SK-N-SH (cell line): ENCODE measurements at regions of chr11 and their contacts with region 1.

Region 1: GRCh38 chr11:2305140-2305840 is 3.5 kb downstream of the TSPAN32 start:
- DNase-seq: peak; percentile 85
- H3K4me3 ChIP-seq: peak overlapping the region in 1 of 2 experiments; percentile 27; a peak in 1 of 4 replicates
- H3K27ac ChIP-seq: peak overlapping the region; percentile 82 to 87; a peak in 3 of 4 replicates
- H3K4me1 ChIP-seq: peaks cover 12 to 48% of the 10 kb centered on the region in 2 experiments; a peak in 3 of 4 replicates
- H3K27me3 ChIP-seq: no peaks in the 10 kb centered on the region
- CTCF ChIP-seq: peak; percentile 85
- EP300 ChIP-seq: no peak
- RAD21 ChIP-seq: peak; percentile 88

Region 2: GRCh38 chr11:2186669-2187279 is 118.5 kb before region 1 on chr11:
- CTCF ChIA-PET with region 1: interaction called, 18 read pairs
- POLR2A ChIA-PET with region 1: interaction called, 3 read pairs
- DNase-seq: peak; percentile 80
- H3K4me3 ChIP-seq: no peak overlapping the region
- H3K27ac ChIP-seq: no peak overlapping the region; a peak in 1 of 4 replicates
- H3K4me1 ChIP-seq: peaks cover 0 to 39% of the 10 kb centered on the region in 2 experiments; a peak in 1 of 4 replicates
- H3K27me3 ChIP-seq: no peaks in the 10 kb centered on the region
- CTCF ChIP-seq: peak; percentile 17; the same call in 1 of the 2 replicates
- EP300 ChIP-seq: no peak
- RAD21 ChIP-seq: peak; percentile 73

Region 3: DNA sequence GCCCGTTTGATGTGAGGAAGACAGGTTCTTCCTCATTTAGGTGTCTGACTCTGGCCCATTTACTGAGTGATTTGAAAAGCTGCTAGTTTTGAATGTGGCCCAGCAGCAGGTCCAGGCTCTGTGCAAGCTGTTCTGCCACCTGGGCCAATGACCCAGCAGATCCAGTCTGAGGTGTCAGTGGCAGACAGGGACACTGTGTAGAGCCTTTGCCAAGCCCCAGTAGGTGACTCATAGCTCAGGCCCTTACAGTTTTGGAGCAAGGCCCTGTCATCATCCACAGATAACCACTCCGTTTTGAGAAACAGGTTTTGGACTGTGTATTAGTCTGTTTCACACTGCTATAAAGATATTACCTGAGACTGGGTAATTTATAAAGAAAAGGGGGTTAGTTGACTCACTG is 20.4 kb after region 1 on chr11:
- CTCF ChIA-PET with region 1: interaction called, 12 read pairs
- POLR2A ChIA-PET with region 1: no interaction called
- DNase-seq: no peak
- H3K4me3 ChIP-seq: no peak overlapping the region
- H3K27ac ChIP-seq: no peak overlapping the region
- H3K4me1 ChIP-seq: no peaks in the 10 kb centered on the region
- H3K27me3 ChIP-seq: no peaks in the 10 kb centered on the region
- CTCF ChIP-seq: no peak
- EP300 ChIP-seq: no peak
- RAD21 ChIP-seq: no peak

Region 4: GRCh38 chr11:2390725-2391151 is 85.4 kb after region 1 on chr11:
- CTCF ChIA-PET with region 1: interaction called, 17 read pairs
- POLR2A ChIA-PET with region 1: no interaction called
- DNase-seq: no peak
- H3K4me3 ChIP-seq: no peak overlapping the region
- H3K27ac ChIP-seq: no peak overlapping the region
- H3K4me1 ChIP-seq: peaks cover 9 to 32% of the 10 kb centered on the region in 2 experiments; a peak in 2 of 4 replicates
- H3K27me3 ChIP-seq: no peaks in the 10 kb centered on the region
- CTCF ChIP-seq: no peak
- EP300 ChIP-seq: no peak
- RAD21 ChIP-seq: no peak

Region 5: DNA sequence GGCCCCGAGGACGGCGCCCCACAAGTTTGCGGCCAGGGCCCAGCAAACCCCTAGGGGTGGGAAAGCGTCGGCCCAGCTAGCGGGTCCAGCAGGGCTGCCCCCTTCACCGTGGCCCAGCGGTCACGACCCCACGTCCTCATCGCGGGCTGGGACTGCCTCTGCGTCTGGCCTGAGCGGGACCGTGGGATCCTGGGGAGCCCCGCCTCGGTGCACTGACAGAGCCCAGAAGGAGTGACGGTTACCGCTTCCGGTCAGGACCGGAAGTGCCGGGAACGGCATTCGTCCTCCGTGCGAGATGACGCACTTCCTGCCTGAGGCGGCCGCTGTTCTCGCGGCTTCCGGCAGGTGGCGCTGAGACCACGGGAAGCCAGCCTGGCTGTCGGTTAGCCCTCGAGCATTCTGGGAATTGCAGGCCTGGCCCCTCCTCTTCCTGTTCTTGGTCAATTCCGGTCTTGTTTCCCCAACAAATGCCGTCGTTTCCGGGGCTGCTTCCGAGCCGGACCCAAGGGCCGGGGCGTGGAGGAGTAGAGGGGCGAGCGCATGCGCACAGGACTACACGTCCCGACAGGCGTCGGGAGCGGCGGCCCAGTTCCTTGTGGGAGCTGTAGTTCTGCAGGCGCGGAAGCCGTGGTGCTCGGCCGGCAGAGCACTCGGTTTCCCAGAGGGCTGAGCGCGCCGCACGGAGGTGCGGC is 94.9 kb after region 1 on chr11 and contains the start of gene TSSC4:
- CTCF ChIA-PET with region 1: interaction called, 70 read pairs
- POLR2A ChIA-PET with region 1: interaction called, 4 read pairs
- DNase-seq: peak; percentile 99
- H3K4me3 ChIP-seq: peak within 1 kb of the TSS; percentile 99 to 100
- H3K27ac ChIP-seq: peak within 1 kb of the TSS; percentile 93 to 95
- H3K4me1 ChIP-seq: peaks cover 10 to 23% of the 10 kb centered on the region in 2 experiments; a peak in 2 of 4 replicates
- H3K27me3 ChIP-seq: no peaks in the 10 kb centered on the region
- CTCF ChIP-seq: peak; percentile 96
- EP300 ChIP-seq: peak in 1 of 2 experiments; percentile 25; a peak in 1 of 4 replicates
- RAD21 ChIP-seq: peak; percentile 83
- polyA plus RNA-seq, gene TSSC4: 45.1 and 45.3 TPM in 2 replicates